Ascending aorta (tissue), 2 donors: ENCODE measurements at regions of chr9 and their contacts with region 1.

Region 1: GRCh38 chr9:113564498-113565237 is 101.1 kb downstream of the RGS3 start:
- DNase-seq: peak in 1 of 2 donors; percentile 90
- H3K4me3 ChIP-seq: peak overlapping the region; percentile 52 to 81
- H3K27ac ChIP-seq: peak overlapping the region; percentile 94 to 97
- H3K4me1 ChIP-seq: peaks cover 34 to 53% of the 10 kb centered on the region in 2 donors
- H3K27me3 ChIP-seq: no peaks in the 10 kb centered on the region
- CTCF ChIP-seq: no peak

Region 2: DNA sequence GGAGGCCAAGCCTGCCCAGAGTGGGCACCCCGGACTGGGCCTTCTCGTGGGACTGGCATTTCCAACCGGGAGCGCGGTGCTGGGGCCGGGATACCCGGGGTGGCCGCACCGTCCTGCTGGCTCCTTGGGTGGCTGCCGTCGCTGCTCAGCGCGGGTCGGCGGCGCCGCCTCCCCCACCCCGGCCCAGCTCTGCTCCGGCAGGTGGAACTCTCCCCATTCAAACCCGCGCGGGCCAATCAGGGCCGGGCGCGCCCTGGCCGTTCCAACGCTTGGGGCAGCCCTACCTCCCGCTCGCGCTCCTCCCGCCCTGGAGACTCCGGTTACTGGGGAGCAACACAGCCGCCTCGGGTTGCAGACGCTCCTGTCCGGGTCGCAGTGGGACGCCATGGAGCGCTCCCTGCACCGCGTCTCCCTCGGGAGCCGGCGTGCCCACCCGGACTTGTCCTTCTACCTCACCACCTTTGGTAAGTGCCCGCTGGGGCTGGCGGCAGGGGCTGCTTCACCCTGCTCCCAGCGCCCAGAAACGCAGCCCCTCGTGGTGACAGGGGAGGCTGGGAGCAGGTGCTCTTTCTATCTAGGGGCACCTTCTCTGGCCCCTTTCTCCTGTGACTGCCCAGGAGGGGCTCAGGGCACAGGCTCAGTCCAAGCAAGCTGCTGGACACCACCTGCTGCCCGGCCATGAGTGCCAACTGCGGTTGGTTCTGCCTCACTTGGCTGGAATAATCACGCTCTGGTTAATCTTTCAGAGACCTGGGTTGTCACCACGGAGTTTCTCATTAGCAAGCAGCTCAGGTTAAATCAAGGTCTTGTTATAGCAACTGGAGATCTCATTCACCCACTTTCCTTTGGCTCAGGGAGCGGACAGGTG is 101.0 kb before region 1 on chr9 and contains the start of gene RGS3:
- intact Hi-C with region 1: loop called (anchors 5 kb)
- DNase-seq: peak; percentile 37 to 86
- H3K4me3 ChIP-seq: peak within 1 kb of the TSS; percentile 58 to 72
- H3K27ac ChIP-seq: peak within 1 kb of the TSS; percentile 81 to 83
- H3K4me1 ChIP-seq: peaks cover 0 to 7% of the 10 kb centered on the region in 2 donors
- H3K27me3 ChIP-seq: no peaks in the 10 kb centered on the region
- CTCF ChIP-seq: peak in 1 of 3 experiments; percentile 41
- total RNA-seq, gene RGS3: 125 TPM

Region 3: DNA sequence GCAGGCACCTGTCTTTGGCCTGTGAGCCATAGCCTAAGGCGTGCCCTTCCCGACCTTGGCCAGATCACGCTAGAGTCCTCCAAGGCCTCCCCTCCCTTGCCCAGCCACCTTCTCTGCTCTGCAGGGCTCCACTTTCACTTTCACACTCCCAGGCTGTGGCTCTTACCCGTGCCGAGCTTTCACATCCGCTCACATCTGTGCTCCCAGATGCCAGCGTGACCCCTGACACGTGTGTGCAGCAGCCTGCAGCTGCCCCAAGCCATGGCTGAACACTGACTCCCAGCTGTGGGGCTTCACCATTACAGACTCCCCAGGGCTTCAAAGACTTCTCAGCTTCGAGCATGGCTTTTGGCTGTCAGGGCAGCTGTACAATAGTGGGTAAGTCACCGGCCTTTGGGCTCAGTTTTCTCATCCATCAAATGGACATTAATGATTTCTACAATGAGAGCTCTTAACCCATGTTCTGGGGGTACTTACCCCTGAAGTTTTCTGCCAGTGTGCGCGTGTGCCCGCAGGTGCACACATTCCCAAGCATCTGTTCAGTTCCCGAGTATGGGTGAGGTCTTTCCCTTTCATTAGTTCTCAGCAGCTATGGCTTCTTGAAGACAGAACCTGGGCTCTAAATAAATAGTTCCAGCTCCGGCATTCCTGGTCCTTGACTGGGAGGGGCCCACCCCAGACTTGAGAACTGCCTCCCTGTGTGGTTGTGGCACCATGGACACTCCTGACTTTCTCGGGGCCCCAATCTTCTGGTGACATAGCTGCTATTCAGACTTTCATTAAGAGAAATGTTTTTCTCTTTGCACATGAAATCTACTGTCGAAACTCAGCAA is 17.4 kb after region 1 on chr9:
- intact Hi-C with region 1: loop called (anchors 1 kb)
- DNase-seq: peak; percentile 59 to 88
- H3K4me3 ChIP-seq: peak overlapping the region; percentile 41 to 44
- H3K27ac ChIP-seq: peak overlapping the region; percentile 93 to 96
- H3K4me1 ChIP-seq: peaks cover 34 to 71% of the 10 kb centered on the region in 2 donors
- H3K27me3 ChIP-seq: no peaks in the 10 kb centered on the region
- CTCF ChIP-seq: peak in 2 of 3 experiments; percentile 29 to 60